ENCODE measurements at regions of chr6 and their contacts with region 1.

Region 1: GRCh38 chr6:5260661-5261544 is at the starts of genes FARS2 and LYRM4:
- DNase-seq: no peak
- ATAC-seq: peak; percentile 87
- H3K4me3 ChIP-seq: peak within 1 kb of the TSS; percentile 90
- H3K27ac ChIP-seq: peak within 1 kb of the TSS; percentile 98
- H3K4me1 ChIP-seq: peaks cover 8% of the 10 kb centered on the region; the same call in 1 of the 2 replicates
- H3K27me3 ChIP-seq: no peaks in the 10 kb centered on the region
- CTCF ChIP-seq: peak in 2 of 3 experiments; percentile 11 to 18; a peak in 2 of 6 replicates
- EP300 ChIP-seq: no peak
- POLR2A ChIP-seq: peak; percentile 64
- RAD21 ChIP-seq: no peak
- polyA plus RNA-seq, gene FARS2: 35.1 to 46.7 TPM
- polyA plus RNA-seq, gene LYRM4: 65.6 to 66.8 TPM

Region 2: GRCh38 chr6:5211492-5211891 is 49.4 kb before region 1 on chr6:
- CTCF ChIA-PET with region 1: no interaction called
- POLR2A ChIA-PET with region 1: no interaction called
- RAD21 ChIA-PET with region 1: no interaction called
- SMC1A ChIA-PET with region 1: no interaction called
- in situ Hi-C with region 1: no loop called
- intact Hi-C with region 1: no loop called
- DNase-seq: no peak
- ATAC-seq: no peak
- H3K4me3 ChIP-seq: no peak overlapping the region
- H3K27ac ChIP-seq: no peak overlapping the region
- H3K4me1 ChIP-seq: no peaks in the 10 kb centered on the region
- H3K27me3 ChIP-seq: no peaks in the 10 kb centered on the region
- CTCF ChIP-seq: no peak
- EP300 ChIP-seq: no peak
- POLR2A ChIP-seq: no peak
- RAD21 ChIP-seq: no peak

Region 3: DNA sequence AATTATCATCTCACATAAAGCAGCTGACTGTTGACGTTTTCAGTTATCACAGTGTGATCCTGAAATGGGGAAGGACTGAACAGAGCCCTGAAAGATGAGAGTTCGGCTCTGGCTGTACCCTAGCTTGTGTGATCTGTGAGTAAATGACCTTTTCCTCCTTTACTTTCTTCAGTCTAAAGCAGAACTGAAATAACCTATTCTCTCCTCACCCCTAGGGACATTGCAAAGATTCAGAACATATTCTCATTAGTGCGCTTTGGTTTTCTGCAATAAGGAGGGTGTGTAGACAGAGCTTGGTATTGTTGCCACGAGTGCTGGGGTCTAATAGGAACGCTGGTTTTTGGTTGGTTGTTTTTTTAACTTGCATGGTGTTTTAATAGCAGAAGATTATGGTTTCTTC is 17.1 kb after region 1 on chr6:
- CTCF ChIA-PET with region 1: interaction called, 5 read pairs
- POLR2A ChIA-PET with region 1: interaction called, 7 read pairs
- RAD21 ChIA-PET with region 1: no interaction called
- SMC1A ChIA-PET with region 1: interaction called, 9 read pairs
- in situ Hi-C with region 1: no loop called
- intact Hi-C with region 1: loop called (anchors 1 kb)
- DNase-seq: peak; percentile 60
- ATAC-seq: peak; percentile 90
- H3K4me3 ChIP-seq: no peak overlapping the region
- H3K27ac ChIP-seq: peak overlapping the region; percentile 28; the same call in 1 of the 2 replicates
- H3K4me1 ChIP-seq: peaks cover 21% of the 10 kb centered on the region
- H3K27me3 ChIP-seq: no peaks in the 10 kb centered on the region
- CTCF ChIP-seq: no peak
- EP300 ChIP-seq: peak in 1 of 2 experiments; percentile 38; a peak in 1 of 4 replicates
- POLR2A ChIP-seq: no peak
- RAD21 ChIP-seq: no peak

Region 4: DNA sequence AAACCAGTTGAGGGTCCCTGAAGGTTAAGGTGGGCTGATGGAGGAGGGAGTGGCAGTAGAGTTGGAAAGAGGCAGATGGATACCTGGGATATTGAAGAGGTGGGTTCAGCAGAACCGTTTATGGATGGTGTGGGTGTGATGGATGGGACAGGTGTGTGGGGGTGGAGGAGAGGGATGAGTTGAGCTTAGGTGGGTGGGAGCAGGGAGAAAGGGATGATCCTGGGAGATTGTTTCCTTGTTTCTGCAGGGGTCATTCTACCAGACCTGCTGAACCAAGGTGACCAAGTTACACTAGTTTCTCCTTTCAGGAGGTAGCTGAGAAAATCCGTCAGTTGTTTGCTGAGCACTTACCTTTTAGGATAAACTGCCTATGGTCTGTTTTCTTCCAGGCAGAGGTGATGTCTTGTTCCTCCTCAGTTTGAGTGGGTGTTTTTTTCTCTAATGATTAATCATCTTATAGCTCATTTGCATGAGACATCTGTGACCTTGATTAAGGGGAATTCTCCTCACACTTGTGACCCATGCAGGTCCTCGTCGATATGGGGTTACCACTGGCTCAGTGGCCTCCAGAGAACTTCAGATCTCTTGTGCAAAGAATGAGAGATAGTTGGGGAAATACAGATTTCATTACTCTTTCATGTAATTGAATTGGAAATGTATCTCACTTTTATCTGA is 53.4 kb after region 1 on chr6:
- CTCF ChIA-PET with region 1: no interaction called
- POLR2A ChIA-PET with region 1: no interaction called
- RAD21 ChIA-PET with region 1: no interaction called
- SMC1A ChIA-PET with region 1: no interaction called
- in situ Hi-C with region 1: no loop called
- intact Hi-C with region 1: no loop called
- DNase-seq: no peak
- ATAC-seq: peak; percentile 53
- H3K4me3 ChIP-seq: no peak overlapping the region
- H3K27ac ChIP-seq: no peak overlapping the region
- H3K4me1 ChIP-seq: peaks cover 6% of the 10 kb centered on the region; the same call in 1 of the 2 replicates
- H3K27me3 ChIP-seq: no peaks in the 10 kb centered on the region
- CTCF ChIP-seq: no peak
- EP300 ChIP-seq: no peak
- POLR2A ChIP-seq: no peak
- RAD21 ChIP-seq: no peak

Region 5: DNA sequence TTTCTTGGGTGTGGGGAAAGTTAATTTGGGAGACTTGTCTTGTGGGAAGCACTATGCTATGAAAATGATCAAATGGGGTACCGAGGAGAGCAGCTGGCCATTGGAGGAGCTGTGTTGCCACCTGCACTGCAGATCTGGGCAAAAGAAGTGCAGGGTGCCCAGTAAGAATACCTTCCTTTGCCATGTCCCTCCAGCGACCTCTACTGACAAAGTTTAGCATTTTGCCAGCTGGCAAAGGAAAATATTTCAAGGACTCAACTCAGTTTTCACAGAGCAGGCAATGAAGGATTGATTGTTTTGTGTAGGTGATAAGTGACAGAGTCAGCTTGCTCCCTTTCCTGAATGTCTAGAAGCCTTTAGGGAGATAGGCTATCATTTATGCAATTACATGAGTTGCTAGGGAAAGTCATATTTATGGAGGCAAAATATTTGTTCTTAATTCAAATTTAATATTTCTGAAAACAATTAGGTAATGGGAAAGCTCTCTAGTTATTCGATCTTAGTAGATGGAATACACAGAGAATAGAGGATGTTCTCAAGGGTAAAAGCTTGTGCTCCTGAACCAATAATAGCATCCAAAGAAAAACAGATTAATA is 118.8 kb after region 1 on chr6:
- CTCF ChIA-PET with region 1: interaction called, 5 read pairs
- POLR2A ChIA-PET with region 1: no interaction called
- RAD21 ChIA-PET with region 1: no interaction called
- SMC1A ChIA-PET with region 1: interaction called, 4 read pairs
- in situ Hi-C with region 1: no loop called
- intact Hi-C with region 1: loop called (anchors 1 kb)
- DNase-seq: peak; percentile 25
- ATAC-seq: peak; percentile 88
- H3K4me3 ChIP-seq: no peak overlapping the region
- H3K27ac ChIP-seq: no peak overlapping the region
- H3K4me1 ChIP-seq: no peaks in the 10 kb centered on the region
- H3K27me3 ChIP-seq: no peaks in the 10 kb centered on the region
- CTCF ChIP-seq: peak; percentile 76 to 87 (median 78)
- EP300 ChIP-seq: no peak
- POLR2A ChIP-seq: no peak
- RAD21 ChIP-seq: peak; percentile 82

Region 6: GRCh38 chr6:5507131-5507681 is 246.3 kb after region 1 on chr6:
- CTCF ChIA-PET with region 1: no interaction called
- POLR2A ChIA-PET with region 1: no interaction called
- RAD21 ChIA-PET with region 1: no interaction called
- SMC1A ChIA-PET with region 1: no interaction called
- in situ Hi-C with region 1: no loop called
- intact Hi-C with region 1: no loop called
- DNase-seq: peak; percentile 92
- ATAC-seq: peak; percentile 94
- H3K4me3 ChIP-seq: peak overlapping the region; percentile 60
- H3K27ac ChIP-seq: peak overlapping the region; percentile 88
- H3K4me1 ChIP-seq: peaks cover 26% of the 10 kb centered on the region
- H3K27me3 ChIP-seq: no peaks in the 10 kb centered on the region
- CTCF ChIP-seq: no peak
- EP300 ChIP-seq: peak in 1 of 2 experiments; percentile 85; a peak in 3 of 4 replicates
- POLR2A ChIP-seq: no peak
- RAD21 ChIP-seq: no peak